Naive thymus-derived CD4-positive, alpha-beta T cell (primary cell): ENCODE measurements at regions of chr1 and their contacts with region 1.

Region 1: DNA sequence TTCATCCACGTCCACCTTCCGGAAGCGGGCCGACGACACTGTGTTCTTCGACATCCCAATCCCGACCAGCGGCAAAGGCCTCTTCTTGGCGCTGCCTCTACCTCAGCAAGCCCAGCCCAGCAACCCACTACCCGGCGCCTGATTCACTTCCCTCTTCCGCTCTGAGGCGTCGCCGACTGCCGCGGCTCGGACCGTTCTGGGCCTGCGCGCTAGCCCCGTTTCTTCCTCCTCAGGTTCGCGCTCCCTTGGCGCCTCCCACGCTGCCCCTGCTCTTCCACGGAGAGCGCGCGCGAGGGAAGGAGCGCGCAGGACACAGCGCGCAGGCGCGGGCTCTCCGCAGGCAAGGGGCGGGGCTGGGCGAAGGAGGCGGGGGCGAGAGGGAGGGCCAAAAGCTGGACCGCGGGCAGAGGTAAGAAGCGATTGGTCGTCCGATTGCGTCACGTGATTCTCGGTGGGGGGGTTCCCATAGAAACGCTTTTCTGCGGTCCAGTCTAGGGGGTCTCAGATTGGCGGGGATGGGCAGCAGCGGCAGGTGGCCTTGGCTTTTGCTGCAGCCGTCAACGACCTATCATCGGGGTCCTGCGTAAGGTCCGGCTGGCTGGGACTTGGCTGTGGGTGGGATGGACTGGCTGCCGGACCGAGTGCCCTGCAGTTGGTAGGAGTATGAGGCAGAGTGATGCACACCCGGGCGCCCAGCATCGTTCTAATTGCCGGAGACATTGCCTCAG is at the start of gene ARPC5:
- DNase-seq: peak; percentile 90 to 98 (median 92)
- ATAC-seq: peak; percentile 92
- H3K4me3 ChIP-seq: peak within 1 kb of the TSS; percentile 94
- H3K4me3 Mint-ChIP-seq: peak within 1 kb of the TSS; percentile 95 to 100 (median 100)
- H3K27ac ChIP-seq: peak within 1 kb of the TSS; percentile 80
- H3K27ac Mint-ChIP-seq: peak within 1 kb of the TSS; percentile 94 to 100 (median 99)
- H3K4me1 ChIP-seq: peaks cover 14 to 22% of the 10 kb centered on the region in 2 donors
- H3K4me1 Mint-ChIP-seq: peaks cover 15 to 50% (median 39%) of the 10 kb centered on the region in 7 donors
- H3K27me3 ChIP-seq: no peaks in the 10 kb centered on the region
- H3K27me3 Mint-ChIP-seq: peaks cover 0 to 27% (median 0%) of the 10 kb centered on the region in 5 donors
- total RNA-seq, gene ARPC5: 49.9 to 252 (median 105) TPM

Region 2: DNA sequence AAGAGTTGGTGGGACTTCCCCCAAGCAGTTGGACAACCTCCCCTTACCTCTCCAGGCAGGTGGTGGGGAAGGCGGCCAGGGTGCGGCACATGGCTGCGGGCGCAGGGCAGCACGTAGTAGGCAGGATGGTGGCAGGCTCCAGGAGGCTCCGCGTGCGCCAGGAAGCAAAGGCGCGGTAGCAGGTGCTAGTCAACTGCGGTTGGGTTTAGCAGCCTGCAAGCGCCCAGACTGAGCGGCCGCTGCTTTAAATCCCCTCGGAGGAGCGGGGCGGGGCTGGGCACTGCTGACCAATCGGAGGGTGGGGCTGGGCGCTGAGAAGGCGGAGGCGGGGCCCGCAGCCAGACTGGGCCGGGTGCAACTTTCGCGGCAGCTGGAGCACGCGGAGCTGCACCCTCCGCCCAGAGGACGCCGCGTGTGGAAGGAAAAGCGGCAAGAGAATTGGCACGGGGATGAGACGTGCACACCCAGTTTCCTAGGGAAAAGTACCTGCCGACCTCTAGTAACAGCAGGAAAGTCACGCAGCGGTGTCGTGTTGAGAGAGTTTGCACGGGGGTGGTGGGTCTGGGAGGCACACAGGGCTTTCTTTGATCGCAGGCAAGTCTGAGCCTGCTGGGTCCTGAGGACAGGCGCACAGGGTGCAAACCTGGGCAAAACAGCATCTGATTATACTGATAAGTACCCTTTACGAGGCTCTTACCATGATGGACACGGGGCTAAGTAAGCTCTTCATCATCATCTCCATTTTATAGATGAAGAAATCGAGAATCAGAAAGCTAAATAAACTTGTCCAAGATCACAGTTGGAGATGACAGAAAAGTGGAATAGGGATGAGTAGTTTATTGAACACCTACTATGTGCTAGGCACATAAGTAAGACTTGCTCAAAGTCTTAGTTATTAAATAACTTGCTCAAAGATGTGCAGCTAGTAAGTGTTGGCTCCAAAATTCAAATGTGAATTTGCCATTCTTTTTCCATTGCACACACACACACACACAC is 1031.3 kb before region 1 on chr1 and contains the start of gene RGS16:
- CTCF ChIA-PET with region 1: no interaction called
- POLR2A ChIA-PET with region 1: no interaction called
- intact Hi-C with region 1: loop called in 1 of 2 experiments (anchors 5 kb)
- DNase-seq: peak; percentile 69 to 95 (median 76)
- ATAC-seq: peak; percentile 93
- H3K4me3 ChIP-seq: peak within 1 kb of the TSS; percentile 59
- H3K4me3 Mint-ChIP-seq: peak within 1 kb of the TSS in 8 of 10 donors; percentile 6 to 87 (median 82)
- H3K27ac ChIP-seq: peak within 1 kb of the TSS; percentile 37
- H3K27ac Mint-ChIP-seq: peak within 1 kb of the TSS in 6 of 9 donors; percentile 13 to 84 (median 71)
- H3K4me1 ChIP-seq: peaks cover 13 to 26% of the 10 kb centered on the region in 2 donors
- H3K4me1 Mint-ChIP-seq: peaks cover 4 to 37% (median 18%) of the 10 kb centered on the region in 7 donors
- H3K27me3 ChIP-seq: no peaks in the 10 kb centered on the region
- H3K27me3 Mint-ChIP-seq: peaks cover 0 to 12% (median 7%) of the 10 kb centered on the region in 5 donors
- total RNA-seq, gene RGS16: 0.49 to 17.5 (median 3.4) TPM

Region 3: GRCh38 chr1:182839209-182840065 is 796.3 kb before region 1 on chr1 and contains the start of gene DHX9:
- CTCF ChIA-PET with region 1: no interaction called
- POLR2A ChIA-PET with region 1: no interaction called
- intact Hi-C with region 1: loop called (anchors 1 kb)
- DNase-seq: peak; percentile 93 to 100 (median 97)
- ATAC-seq: peak; percentile 89
- H3K4me3 ChIP-seq: peak within 1 kb of the TSS; percentile 99
- H3K4me3 Mint-ChIP-seq: peak within 1 kb of the TSS; percentile 91 to 100 (median 98)
- H3K27ac ChIP-seq: peak within 1 kb of the TSS; percentile 84
- H3K27ac Mint-ChIP-seq: peak within 1 kb of the TSS; percentile 92 to 100 (median 98)
- H3K4me1 ChIP-seq: peaks cover 22 to 33% of the 10 kb centered on the region in 2 donors
- H3K4me1 Mint-ChIP-seq: peaks cover 36 to 61% (median 54%) of the 10 kb centered on the region in 7 donors
- H3K27me3 ChIP-seq: no peaks in the 10 kb centered on the region
- H3K27me3 Mint-ChIP-seq: peaks cover 0 to 9% (median 0%) of the 10 kb centered on the region in 5 donors
- total RNA-seq, gene DHX9: 207 to 299 (median 227) TPM

Region 4: DNA sequence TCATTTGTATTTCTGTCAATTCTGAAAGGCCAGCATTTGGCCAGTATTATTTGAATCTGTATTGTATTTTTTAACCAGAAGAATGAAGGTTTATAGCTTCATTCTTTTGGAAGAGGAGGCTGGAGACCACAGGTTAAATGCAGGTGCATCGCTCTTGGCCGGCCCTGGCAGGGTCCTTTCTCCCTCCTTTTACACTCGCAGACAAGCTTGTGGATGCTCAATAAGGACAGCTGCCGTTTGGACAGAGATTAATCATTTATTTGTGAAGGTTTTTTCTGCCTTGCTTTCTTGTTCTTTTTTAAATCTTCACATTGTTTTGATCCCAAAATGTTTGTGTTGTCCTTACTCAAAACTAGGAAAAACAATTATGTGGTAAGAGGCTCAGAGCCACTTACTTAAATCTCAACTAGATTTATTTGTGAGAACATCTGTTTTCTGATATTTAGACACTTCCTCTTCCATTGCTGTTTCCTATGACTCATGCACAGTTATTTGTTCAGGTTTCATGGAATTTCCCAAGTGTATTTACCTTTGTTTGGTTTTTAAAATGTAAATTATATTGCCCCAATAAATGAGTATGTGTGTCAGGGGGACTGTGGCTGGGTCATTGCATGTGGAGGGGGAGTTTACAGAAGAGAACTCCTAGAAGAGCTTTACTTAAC is 496.4 kb before region 1 on chr1:
- CTCF ChIA-PET with region 1: no interaction called
- POLR2A ChIA-PET with region 1: no interaction called
- intact Hi-C with region 1: no loop called
- DNase-seq: no peak
- ATAC-seq: no peak
- H3K4me3 ChIP-seq: no peak overlapping the region
- H3K4me3 Mint-ChIP-seq: no peak overlapping the region
- H3K27ac ChIP-seq: no peak overlapping the region
- H3K27ac Mint-ChIP-seq: no peak overlapping the region
- H3K4me1 ChIP-seq: no peaks in the 10 kb centered on the region
- H3K4me1 Mint-ChIP-seq: no peaks in the 10 kb centered on the region
- H3K27me3 ChIP-seq: no peaks in the 10 kb centered on the region
- H3K27me3 Mint-ChIP-seq: peaks cover 0 to 30% (median 4%) of the 10 kb centered on the region in 5 donors

Region 5: DNA sequence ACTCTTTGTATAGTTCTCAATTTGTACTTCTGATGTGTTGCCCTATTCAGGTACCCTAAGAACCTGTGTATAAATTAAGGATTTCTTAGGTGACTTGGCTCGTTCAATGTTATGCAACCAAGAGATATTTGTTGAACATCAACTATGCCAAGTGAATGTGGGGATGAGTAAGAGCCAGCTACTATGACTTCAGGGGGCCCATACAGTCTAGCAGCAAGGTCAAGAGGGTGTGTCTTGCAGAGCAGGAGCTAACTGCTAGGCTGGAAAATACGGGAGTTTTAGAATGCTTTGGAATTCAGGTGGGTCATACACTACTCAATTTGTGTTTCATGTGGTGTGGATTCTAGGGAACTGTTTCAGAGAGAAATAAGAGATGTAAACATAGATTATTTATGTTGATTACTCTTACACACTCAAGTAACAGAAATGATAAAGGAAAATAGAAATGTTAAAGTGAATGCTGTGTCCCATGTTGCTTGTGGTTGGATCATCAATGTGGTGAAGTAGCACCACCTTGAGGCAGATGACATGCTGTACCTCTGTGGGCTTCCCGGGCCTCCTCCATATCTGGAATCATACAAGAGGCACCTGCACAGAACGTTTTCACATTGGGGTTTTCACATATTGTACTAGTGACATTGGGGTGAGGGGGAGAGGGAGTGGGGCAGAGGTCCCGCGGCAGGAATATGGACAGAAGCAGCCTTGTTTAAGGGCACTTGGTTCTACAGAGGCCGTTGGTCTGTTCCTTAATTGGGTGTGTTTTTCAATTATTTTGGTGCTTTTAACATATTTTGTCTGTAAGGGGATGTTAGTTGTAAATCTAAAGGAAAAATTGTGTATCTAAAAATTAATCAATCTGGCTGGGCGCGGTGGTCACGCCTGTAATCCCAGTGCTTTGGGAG is 12.6 kb before region 1 on chr1:
- CTCF ChIA-PET with region 1: no interaction called
- POLR2A ChIA-PET with region 1: interaction called, 4 read pairs
- intact Hi-C with region 1: loop called (anchors 1 kb)
- DNase-seq: peak in 7 of 9 donors; percentile 38 to 67 (median 43)
- ATAC-seq: peak; percentile 96
- H3K4me3 ChIP-seq: no peak overlapping the region
- H3K4me3 Mint-ChIP-seq: no peak overlapping the region
- H3K27ac ChIP-seq: peak overlapping the region; percentile 37
- H3K27ac Mint-ChIP-seq: peak overlapping the region; percentile 1 to 76 (median 58)
- H3K4me1 ChIP-seq: peaks cover 0 to 5% of the 10 kb centered on the region in 2 donors
- H3K4me1 Mint-ChIP-seq: peaks cover 10 to 48% (median 20%) of the 10 kb centered on the region in 7 donors
- H3K27me3 ChIP-seq: no peaks in the 10 kb centered on the region
- H3K27me3 Mint-ChIP-seq: no peaks in the 10 kb centered on the region

Region 6: DNA sequence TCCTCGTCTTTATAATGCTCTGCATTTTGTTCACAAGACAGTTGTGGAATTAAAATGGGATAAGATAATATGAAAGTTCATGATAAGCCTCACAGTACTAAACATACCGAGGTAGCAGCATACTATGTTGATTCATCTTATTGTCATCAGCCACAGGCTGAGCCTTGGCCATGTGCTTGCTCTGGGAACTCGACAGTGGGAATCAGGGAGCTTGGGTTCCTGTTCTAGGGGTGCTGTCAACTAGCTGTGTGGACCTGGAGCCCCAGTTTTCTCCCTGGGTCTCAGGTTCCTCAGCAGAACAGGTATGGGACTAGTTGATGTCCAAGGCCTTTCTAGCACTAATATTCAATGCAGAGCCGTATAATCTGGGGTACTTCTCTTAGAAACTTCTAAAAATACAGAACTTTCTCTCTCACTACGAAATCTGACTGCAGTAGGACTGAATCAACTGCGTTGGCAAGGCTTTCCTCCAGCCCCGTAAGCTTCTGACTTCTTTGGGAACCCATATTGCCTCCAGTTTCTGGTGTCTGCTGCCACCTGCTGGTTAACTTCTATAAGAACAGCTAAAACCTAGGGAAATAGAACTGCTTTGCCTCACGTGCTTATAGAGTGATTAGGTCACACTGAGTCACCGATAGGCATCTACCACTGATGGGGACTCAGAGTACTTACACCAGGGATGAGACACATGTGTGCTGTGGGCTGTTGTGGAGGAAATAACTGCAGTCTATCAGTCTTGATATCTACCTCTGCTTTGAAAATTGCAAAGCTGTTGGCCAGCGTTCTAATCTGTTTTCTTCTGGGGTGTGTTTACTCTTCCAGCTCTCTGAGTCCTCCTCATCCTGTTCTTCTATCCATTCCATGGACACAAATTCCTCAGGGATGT is 280.1 kb after region 1 on chr1:
- CTCF ChIA-PET with region 1: interaction called, 10 read pairs
- POLR2A ChIA-PET with region 1: no interaction called
- intact Hi-C with region 1: loop called (anchors 1 kb)
- DNase-seq: peak; percentile 16 to 80 (median 71)
- ATAC-seq: peak; percentile 96
- H3K4me3 ChIP-seq: no peak overlapping the region
- H3K4me3 Mint-ChIP-seq: peak overlapping the region in 8 of 10 donors; percentile 19 to 48 (median 38)
- H3K27ac ChIP-seq: no peak overlapping the region
- H3K27ac Mint-ChIP-seq: peak overlapping the region in 4 of 9 donors; percentile 7 to 70 (median 45)
- H3K4me1 ChIP-seq: peaks cover 0 to 5% of the 10 kb centered on the region in 2 donors
- H3K4me1 Mint-ChIP-seq: peaks cover 6 to 17% (median 8%) of the 10 kb centered on the region in 7 donors
- H3K27me3 ChIP-seq: no peaks in the 10 kb centered on the region
- H3K27me3 Mint-ChIP-seq: no peaks in the 10 kb centered on the region

Region 7: DNA sequence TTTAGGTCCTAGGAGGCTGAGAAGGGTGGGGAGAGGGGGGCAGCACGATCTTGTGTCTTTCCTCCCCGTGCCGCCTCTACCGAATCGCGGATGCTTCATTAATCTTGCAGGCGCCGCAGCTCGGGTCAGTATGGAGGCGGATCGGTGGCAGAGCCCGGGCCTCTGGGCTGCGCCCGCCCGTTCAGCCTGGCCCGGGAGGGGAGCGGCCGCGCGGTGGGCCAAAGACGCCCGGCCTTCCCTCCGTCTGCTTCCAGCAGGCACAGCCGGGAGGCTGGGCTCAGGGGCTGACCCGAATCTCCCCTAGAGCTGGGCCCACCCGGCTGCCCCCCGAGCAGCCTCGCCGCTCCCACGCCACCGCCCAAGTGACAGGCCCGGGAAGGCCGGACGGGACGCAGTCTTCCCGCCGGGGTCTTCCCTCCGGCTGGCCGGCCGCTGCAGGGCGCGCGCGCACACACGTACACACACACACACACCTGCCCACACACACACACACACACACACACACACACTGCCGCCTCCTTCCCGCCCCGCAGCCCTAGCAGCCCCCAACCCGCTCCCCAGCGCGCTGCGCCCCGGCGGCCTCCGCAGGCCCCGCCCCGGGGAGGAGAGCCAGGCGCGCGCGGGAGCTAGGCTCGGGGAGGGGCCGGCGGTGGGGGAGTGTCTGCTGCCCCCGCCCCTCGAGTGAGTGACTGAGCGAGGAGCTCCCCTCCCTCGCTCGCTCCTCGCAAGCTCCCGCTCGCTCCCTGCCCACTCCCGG is 750.7 kb after region 1 on chr1 and contains the start of gene C1orf21:
- CTCF ChIA-PET with region 1: no interaction called
- POLR2A ChIA-PET with region 1: no interaction called
- intact Hi-C with region 1: loop called in 1 of 2 experiments (anchors 10 kb)
- DNase-seq: peak in 8 of 9 donors; percentile 11 to 87 (median 37)
- ATAC-seq: peak; percentile 86
- H3K4me3 ChIP-seq: peak within 1 kb of the TSS; percentile 56
- H3K4me3 Mint-ChIP-seq: peak within 1 kb of the TSS; percentile 67 to 90 (median 82)
- H3K27ac ChIP-seq: no peak within 1 kb of the TSS
- H3K27ac Mint-ChIP-seq: peak within 1 kb of the TSS in 2 of 9 donors; percentile 41 to 59
- H3K4me1 ChIP-seq: no peaks in the 10 kb centered on the region
- H3K4me1 Mint-ChIP-seq: peaks cover 8 to 27% (median 22%) of the 10 kb centered on the region in 7 donors
- H3K27me3 ChIP-seq: peaks cover 0 to 3% of the 10 kb centered on the region in 2 donors
- H3K27me3 Mint-ChIP-seq: peaks cover 51 to 85% (median 54%) of the 10 kb centered on the region in 5 donors
- total RNA-seq, gene C1orf21: 0.46 to 8.5 (median 1.7) TPM

Region 8: GRCh38 chr1:185559684-185560331 is 1924.0 kb after region 1 on chr1:
- CTCF ChIA-PET with region 1: no interaction called
- POLR2A ChIA-PET with region 1: no interaction called
- intact Hi-C with region 1: loop called in 1 of 2 experiments (anchors 10 kb)
- DNase-seq: peak in 8 of 9 donors; percentile 9 to 57 (median 18)
- ATAC-seq: peak; percentile 91
- H3K4me3 ChIP-seq: no peak overlapping the region
- H3K4me3 Mint-ChIP-seq: peak overlapping the region in 8 of 10 donors; percentile 46 to 70 (median 58)
- H3K27ac ChIP-seq: no peak overlapping the region
- H3K27ac Mint-ChIP-seq: peak overlapping the region; percentile 63 to 91 (median 81)
- H3K4me1 ChIP-seq: peaks cover 26 to 35% of the 10 kb centered on the region in 2 donors
- H3K4me1 Mint-ChIP-seq: peaks cover 36 to 53% (median 48%) of the 10 kb centered on the region in 7 donors
- H3K27me3 ChIP-seq: no peaks in the 10 kb centered on the region
- H3K27me3 Mint-ChIP-seq: no peaks in the 10 kb centered on the region